Mucosa of descending colon (tissue), 3 donors: ENCODE measurements at regions of chr12 and their contacts with region 1.

Region 1: GRCh38 chr12:53198486-53199110 is 8.5 kb downstream of the ITGB7 start:
- DNase-seq: no peak
- ATAC-seq: no peak
- H3K4me3 ChIP-seq: no peak overlapping the region
- H3K4me1 ChIP-seq: peaks cover 8% of the 10 kb centered on the region
- CTCF ChIP-seq: no peak

Region 2: DNA sequence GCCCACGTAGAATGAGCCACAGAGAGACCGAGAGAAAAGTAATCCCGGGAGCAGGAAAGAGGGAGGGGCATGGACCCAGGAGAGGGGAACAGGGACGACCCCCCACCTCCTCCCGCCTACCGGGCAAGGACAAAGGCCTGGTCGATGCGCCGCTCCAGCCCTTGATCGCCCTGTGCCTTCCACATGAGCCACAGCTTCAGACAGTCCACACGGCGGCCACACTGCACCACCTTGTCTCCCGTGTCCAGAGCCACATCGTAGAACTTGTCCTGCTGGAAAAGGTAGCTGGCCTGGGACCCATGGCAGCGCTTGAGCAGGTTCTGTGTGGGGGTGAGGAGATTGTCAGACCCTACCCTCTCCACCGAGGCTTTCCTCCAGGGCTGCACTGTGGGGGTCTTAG is 38.6 kb before region 1 on chr12:
- intact Hi-C with region 1: loop called in 1 of 2 experiments (anchors 5 kb)
- DNase-seq: no peak
- ATAC-seq: no peak
- H3K4me3 ChIP-seq: no peak overlapping the region
- H3K4me1 ChIP-seq: no peaks in the 10 kb centered on the region
- CTCF ChIP-seq: no peak

Region 3: DNA sequence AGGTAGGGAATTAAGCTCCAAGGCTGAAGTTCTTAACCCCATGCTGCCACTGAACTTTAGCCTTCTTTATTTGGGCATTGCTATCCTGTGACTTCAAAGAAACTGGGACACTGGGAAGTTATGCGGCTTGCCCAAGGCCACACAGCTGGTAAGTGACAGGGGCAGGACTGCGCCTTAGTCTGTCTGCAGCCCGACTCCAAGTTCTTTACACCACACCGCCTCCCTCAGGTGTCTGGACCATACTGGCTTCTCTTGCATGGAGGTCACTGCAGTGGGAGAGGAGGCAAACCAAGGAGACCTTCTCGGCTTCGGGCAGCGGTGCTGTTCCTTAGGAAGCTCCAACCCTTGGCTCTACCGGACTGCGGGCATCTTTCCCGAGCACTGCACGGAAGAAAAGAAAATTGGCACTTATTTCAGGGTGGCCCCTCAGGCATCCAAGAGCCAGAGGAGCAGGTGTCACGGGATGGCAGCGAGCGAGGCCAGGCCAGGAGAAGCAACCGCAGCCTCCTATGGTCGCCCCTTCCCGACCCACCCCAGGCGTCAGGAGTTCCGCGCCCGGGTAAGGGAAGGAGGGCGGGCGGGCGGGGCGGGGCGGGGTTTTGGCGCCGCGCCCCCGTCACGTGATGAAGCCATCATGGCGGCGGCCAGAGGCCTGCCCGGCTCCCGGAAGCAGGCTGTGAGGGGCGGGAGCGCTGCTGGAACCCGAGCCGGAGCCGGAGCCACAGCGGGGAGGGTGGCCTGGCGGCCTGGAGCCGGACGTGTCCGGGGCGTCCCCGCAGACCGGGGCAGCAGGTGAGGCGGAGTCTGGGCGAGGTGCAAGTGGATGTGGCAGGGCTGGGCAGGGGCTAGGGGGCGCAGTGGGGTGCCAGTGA is 53.1 kb after region 1 on chr12:
- intact Hi-C with region 1: no loop called
- DNase-seq: peak; percentile 79 to 88 (median 88)
- ATAC-seq: peak; percentile 92
- H3K4me3 ChIP-seq: peak overlapping the region; percentile 81
- H3K4me1 ChIP-seq: peaks cover 13% of the 10 kb centered on the region
- CTCF ChIP-seq: peak; percentile 22